CD8-positive, alpha-beta T cell (primary cell): ENCODE measurements at regions of chr12 and their contacts with region 1.

Region 1: DNA sequence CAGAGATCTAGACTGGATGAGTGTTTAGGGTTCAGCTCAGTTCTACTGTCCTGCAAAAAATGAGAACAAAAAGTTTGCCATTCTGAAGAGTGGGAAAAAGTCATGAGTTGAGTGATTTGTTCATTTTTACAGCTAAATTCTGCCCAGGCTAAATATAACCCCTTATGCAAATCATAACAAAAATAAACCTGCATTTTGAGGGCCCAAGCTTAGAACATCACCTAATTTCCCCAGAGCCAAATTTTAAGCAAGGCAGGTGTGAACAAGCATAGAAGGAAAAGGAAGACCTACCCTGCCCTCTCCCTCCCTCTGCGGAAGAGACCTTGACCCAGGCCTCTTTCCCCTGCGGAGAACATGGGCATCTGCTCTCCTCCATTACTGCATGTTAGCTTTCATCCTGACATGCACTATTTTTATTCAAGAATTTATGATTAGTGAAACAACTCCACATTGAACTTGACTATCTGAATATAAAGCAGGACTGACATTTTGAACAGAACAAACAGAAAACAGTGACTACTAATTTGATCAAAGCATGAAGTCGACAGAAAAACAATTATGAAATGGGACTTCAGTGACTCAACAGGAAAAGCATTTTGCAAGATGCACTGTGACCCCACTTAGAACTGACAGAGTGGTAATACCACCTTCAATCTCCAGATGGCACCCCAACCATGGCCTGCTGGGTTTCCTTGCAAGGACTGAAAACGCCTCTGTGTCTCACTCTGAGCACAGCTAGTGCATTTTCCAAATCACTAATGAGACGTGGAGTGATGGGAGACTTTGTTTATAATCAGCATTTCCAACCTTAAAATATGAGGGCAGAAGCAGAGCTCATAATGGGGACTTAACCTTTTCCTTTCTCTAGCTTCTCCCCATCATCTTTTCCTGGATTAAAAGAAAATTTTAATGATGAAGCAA is 30.9 kb upstream of the SELPLG start:
- DNase-seq: peak; percentile 70 to 89 (median 83)
- ATAC-seq: peak; percentile 100
- H3K4me3 ChIP-seq: no peak overlapping the region
- H3K4me3 Mint-ChIP-seq: no peak overlapping the region
- H3K27ac ChIP-seq: peak overlapping the region in 1 of 2 experiments; percentile 31
- H3K27ac Mint-ChIP-seq: peak overlapping the region; percentile 79
- H3K4me1 ChIP-seq: peaks cover 5% of the 10 kb centered on the region
- H3K4me1 Mint-ChIP-seq: peaks cover 15% of the 10 kb centered on the region
- H3K27me3 ChIP-seq: no peaks in the 10 kb centered on the region
- H3K27me3 Mint-ChIP-seq: no peaks in the 10 kb centered on the region
- CTCF ChIP-seq: peak; percentile 92

Region 2: DNA sequence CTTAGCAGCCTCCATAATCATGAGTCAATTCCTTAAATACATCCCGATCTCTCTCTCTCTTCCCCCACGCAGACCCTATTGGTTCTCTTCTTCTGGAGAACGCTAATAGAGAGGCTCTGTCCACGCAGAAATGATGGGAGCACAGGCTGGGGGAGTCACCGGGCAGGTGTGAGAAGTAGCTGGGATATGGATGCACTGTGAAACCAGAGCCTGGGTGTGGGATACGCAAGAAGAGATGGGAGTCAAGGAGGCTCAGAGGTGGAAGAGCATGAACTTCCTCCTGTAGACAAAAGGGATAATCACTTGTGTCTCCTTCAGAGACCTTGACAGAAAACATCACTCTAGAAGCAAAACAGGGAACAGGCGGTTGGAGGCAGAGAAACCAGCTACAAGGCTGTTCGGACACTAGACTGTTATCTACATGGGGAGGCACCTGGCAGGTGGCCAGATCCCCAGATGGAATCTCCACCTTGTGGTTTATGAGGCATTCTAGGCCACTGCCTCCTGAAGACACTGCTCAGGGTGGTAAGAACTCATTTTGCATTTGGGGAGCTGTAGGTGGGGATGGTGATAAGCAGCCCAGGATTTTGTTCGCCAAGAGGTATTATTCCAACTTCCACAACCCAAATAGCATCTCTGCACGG is 23.7 kb before region 1 on chr12:
- CTCF ChIA-PET with region 1: interaction called, 115 read pairs
- POLR2A ChIA-PET with region 1: no interaction called
- intact Hi-C with region 1: no loop called
- DNase-seq: peak in 1 of 9 experiments; percentile 30
- ATAC-seq: no peak
- H3K4me3 ChIP-seq: no peak overlapping the region
- H3K4me3 Mint-ChIP-seq: no peak overlapping the region
- H3K27ac ChIP-seq: no peak overlapping the region
- H3K27ac Mint-ChIP-seq: no peak overlapping the region
- H3K4me1 ChIP-seq: peaks cover 37% of the 10 kb centered on the region
- H3K4me1 Mint-ChIP-seq: peaks cover 48% of the 10 kb centered on the region
- H3K27me3 ChIP-seq: no peaks in the 10 kb centered on the region
- H3K27me3 Mint-ChIP-seq: no peaks in the 10 kb centered on the region
- CTCF ChIP-seq: no peak

Region 3: GRCh38 chr12:108691175-108691997 is 26.8 kb after region 1 on chr12:
- CTCF ChIA-PET with region 1: interaction called, 15 read pairs
- POLR2A ChIA-PET with region 1: no interaction called
- intact Hi-C with region 1: loop called in 1 of 2 experiments (anchors 2 kb)
- DNase-seq: peak in 8 of 9 experiments; percentile 47 to 81 (median 68)
- ATAC-seq: peak; percentile 78
- H3K4me3 ChIP-seq: peak overlapping the region; percentile 21 to 30
- H3K4me3 Mint-ChIP-seq: peak overlapping the region; percentile 71
- H3K27ac ChIP-seq: peak overlapping the region in 1 of 2 experiments; percentile 55
- H3K27ac Mint-ChIP-seq: peak overlapping the region; percentile 67
- H3K4me1 ChIP-seq: peaks cover 36% of the 10 kb centered on the region
- H3K4me1 Mint-ChIP-seq: peaks cover 57% of the 10 kb centered on the region
- H3K27me3 ChIP-seq: no peaks in the 10 kb centered on the region
- H3K27me3 Mint-ChIP-seq: no peaks in the 10 kb centered on the region
- CTCF ChIP-seq: no peak

Region 4: GRCh38 chr12:108792361-108793292 is 128.0 kb after region 1 on chr12:
- CTCF ChIA-PET with region 1: interaction called, 418 read pairs
- POLR2A ChIA-PET with region 1: interaction called, 4 read pairs
- intact Hi-C with region 1: no loop called
- DNase-seq: no peak
- ATAC-seq: no peak
- H3K4me3 ChIP-seq: no peak overlapping the region
- H3K4me3 Mint-ChIP-seq: no peak overlapping the region
- H3K27ac ChIP-seq: no peak overlapping the region
- H3K27ac Mint-ChIP-seq: no peak overlapping the region
- H3K4me1 ChIP-seq: no peaks in the 10 kb centered on the region
- H3K4me1 Mint-ChIP-seq: no peaks in the 10 kb centered on the region
- H3K27me3 ChIP-seq: no peaks in the 10 kb centered on the region
- H3K27me3 Mint-ChIP-seq: no peaks in the 10 kb centered on the region
- CTCF ChIP-seq: no peak

Region 5: GRCh38 chr12:108816652-108817335 is 152.2 kb after region 1 on chr12:
- CTCF ChIA-PET with region 1: interaction called, 418 read pairs
- POLR2A ChIA-PET with region 1: no interaction called
- intact Hi-C with region 1: no loop called
- DNase-seq: no peak
- ATAC-seq: no peak
- H3K4me3 ChIP-seq: no peak overlapping the region
- H3K4me3 Mint-ChIP-seq: no peak overlapping the region
- H3K27ac ChIP-seq: no peak overlapping the region
- H3K27ac Mint-ChIP-seq: no peak overlapping the region
- H3K4me1 ChIP-seq: no peaks in the 10 kb centered on the region
- H3K4me1 Mint-ChIP-seq: no peaks in the 10 kb centered on the region
- H3K27me3 ChIP-seq: no peaks in the 10 kb centered on the region
- H3K27me3 Mint-ChIP-seq: no peaks in the 10 kb centered on the region
- CTCF ChIP-seq: no peak

Region 6: DNA sequence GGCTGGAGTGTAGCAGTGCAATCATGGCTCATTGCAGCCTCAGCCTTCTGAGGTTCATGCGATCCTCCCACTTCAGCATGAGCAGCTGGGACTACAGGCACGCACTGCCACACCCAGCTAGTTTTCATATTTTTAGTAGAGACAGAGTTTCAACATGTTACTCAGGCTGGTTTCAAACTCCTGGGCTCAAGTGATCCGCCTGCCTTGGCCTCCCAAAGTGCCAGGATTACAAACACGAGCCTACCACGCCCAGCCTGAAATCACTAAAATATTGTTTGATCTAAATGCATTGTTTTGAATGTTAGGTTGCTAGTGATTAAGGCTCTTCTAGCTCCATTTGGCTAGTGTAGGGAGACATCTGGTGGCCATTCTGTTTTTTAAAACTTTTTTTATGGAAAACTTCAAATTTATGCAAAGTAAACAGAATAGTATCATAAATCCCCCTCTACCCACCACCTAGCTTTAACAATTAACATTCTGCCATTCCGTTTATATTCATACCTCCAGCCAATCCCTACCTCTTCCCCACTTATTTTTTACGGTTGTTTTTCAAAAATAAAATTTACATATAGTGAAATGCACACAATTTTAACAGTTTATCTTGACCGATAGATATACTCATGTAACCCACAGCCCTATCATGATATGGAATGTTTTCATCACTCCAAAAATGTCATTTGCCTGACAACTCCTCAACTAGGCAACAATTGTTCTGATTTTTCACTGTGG is 720.9 kb after region 1 on chr12:
- CTCF ChIA-PET with region 1: no interaction called
- POLR2A ChIA-PET with region 1: no interaction called
- intact Hi-C with region 1: loop called in 1 of 2 experiments (anchors 10 kb)
- DNase-seq: peak in 2 of 9 experiments; percentile 31
- ATAC-seq: no peak
- H3K4me3 ChIP-seq: no peak overlapping the region
- H3K4me3 Mint-ChIP-seq: no peak overlapping the region
- H3K27ac ChIP-seq: no peak overlapping the region
- H3K27ac Mint-ChIP-seq: no peak overlapping the region
- H3K4me1 ChIP-seq: no peaks in the 10 kb centered on the region
- H3K4me1 Mint-ChIP-seq: no peaks in the 10 kb centered on the region
- H3K27me3 ChIP-seq: peaks cover 0 to 4% of the 10 kb centered on the region in 2 experiments
- H3K27me3 Mint-ChIP-seq: peaks cover 24% of the 10 kb centered on the region
- CTCF ChIP-seq: no peak